Adrenal gland (tissue), 19 donors: ENCODE measurements at regions of chr6 and their contacts with region 1.

Region 1: GRCh38 chr6:144215932-144216667 is 65.8 kb downstream of the STX11 start:
- DNase-seq: peak; percentile 90 to 99 (median 95)
- H3K4me3 ChIP-seq: peak overlapping the region; percentile 0 to 83 (median 50)
- H3K27ac ChIP-seq: peak overlapping the region; percentile 91 to 98 (median 93)
- H3K4me1 ChIP-seq: peaks cover 5 to 17% of the 10 kb centered on the region in 2 donors
- H3K27me3 ChIP-seq: no peaks in the 10 kb centered on the region
- CTCF ChIP-seq: peak; percentile 54 to 93 (median 68)
- POLR2A ChIP-seq: peak; percentile 26 to 71

Region 2: DNA sequence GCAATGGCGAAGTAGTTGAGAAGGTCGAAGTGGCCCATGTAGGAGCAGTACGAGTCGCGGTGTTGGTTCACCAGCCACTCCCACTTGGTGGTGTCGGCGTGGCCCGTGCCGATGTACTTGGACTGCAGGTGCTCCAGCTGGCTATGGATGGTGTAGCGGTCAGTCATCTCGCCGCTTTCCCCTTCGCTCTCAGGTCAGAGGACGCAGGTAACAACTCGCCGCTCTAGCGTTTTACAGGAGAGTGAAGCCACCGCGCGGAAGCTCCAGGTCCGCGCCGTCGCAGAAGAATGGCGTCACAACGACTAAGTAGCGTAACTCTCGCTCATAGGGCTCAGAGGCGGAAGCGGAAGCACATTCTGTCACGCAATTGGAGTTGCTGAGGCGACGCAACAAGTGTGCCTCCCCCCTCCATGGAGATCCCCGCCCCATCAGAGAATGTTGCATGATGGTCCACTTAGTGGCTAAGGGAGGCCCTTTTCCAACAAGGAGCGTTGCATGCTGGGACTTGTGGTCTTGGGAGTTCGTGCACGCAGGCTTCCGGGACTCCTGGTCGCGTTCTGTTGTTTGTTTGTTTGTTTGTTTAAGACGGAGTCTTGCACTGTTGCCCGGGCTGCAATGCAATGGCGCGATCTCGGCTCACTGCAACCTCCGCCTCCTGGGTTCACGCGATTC is 120.6 kb before region 1 on chr6 and contains the start of gene SF3B5:
- intact Hi-C with region 1: loop called in 1 of 2 experiments (anchors 5 kb)
- DNase-seq: peak; percentile 98 to 100 (median 99)
- H3K4me3 ChIP-seq: peak within 1 kb of the TSS; percentile 47 to 98 (median 70)
- H3K27ac ChIP-seq: peak within 1 kb of the TSS; percentile 16 to 97 (median 74)
- H3K4me1 ChIP-seq: peaks cover 6 to 21% of the 10 kb centered on the region in 2 donors
- H3K27me3 ChIP-seq: no peaks in the 10 kb centered on the region
- CTCF ChIP-seq: peak in 1 of 6 experiments; percentile 1
- POLR2A ChIP-seq: peak; percentile 75 to 90
- total RNA-seq, gene SF3B5: 109 to 323 (median 194) TPM

Region 3: GRCh38 chr6:144104898-144105487 is 111.1 kb before region 1 on chr6:
- intact Hi-C with region 1: loop called in 1 of 2 experiments (anchors 5 kb)
- DNase-seq: peak in 5 of 7 donors; percentile 30 to 66 (median 38)
- H3K4me3 ChIP-seq: no peak overlapping the region
- H3K27ac ChIP-seq: no peak overlapping the region
- H3K4me1 ChIP-seq: no peaks in the 10 kb centered on the region
- H3K27me3 ChIP-seq: no peaks in the 10 kb centered on the region
- CTCF ChIP-seq: peak; percentile 58 to 87 (median 78)
- POLR2A ChIP-seq: no peak

Region 4: DNA sequence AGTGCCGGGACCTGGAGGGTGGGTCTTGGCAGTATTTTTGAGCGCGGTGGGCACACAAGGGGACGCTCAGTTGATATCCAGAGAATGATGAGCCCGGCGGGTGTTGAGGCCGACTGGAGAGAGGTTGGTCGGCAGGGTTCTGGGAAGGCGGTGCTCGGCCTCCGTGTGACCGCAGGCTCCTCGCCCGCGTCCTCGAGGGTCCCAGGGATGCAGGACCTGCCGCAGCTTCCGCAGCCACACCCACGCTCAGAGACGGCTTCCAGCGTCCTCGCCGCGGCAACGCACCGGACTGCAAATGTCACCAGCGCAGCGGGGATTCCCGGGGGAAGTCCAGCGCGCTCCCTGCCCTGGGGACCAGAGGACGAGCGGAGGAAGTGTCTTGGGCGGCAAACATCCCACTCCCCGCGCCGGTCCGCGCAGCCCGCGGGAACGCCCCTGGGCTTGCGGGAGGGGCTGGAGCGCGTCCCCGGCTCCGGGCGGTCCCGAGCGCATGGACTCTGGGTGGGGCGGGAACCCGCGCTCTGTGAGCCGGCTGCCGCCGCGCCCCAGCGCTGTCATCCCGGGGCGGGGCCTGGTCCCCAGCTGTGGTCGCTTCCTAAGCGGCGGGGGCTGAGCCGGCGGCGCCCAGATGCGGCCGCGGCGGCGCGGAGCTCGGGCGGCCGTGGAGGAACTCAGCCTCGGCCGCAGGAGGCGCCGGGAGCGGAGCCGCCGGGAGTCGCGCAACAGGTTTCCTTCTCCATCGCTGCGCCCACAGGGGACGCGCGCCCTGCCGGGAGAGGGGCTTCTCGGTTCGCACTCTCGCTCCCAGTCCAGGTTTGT is 66.0 kb before region 1 on chr6 and contains the start of gene STX11:
- intact Hi-C with region 1: loop called in 1 of 2 experiments (anchors 10 kb)
- DNase-seq: peak; percentile 56 to 71 (median 60)
- H3K4me3 ChIP-seq: peak within 1 kb of the TSS; percentile 22 to 74 (median 37)
- H3K27ac ChIP-seq: peak within 1 kb of the TSS in 4 of 5 donors; percentile 67 to 89 (median 78)
- H3K4me1 ChIP-seq: no peaks in the 10 kb centered on the region
- H3K27me3 ChIP-seq: no peaks in the 10 kb centered on the region
- CTCF ChIP-seq: no peak
- POLR2A ChIP-seq: peak; percentile 55 to 72
- total RNA-seq, gene STX11: 0.50 to 22.2 (median 12.9) TPM

Region 5: DNA sequence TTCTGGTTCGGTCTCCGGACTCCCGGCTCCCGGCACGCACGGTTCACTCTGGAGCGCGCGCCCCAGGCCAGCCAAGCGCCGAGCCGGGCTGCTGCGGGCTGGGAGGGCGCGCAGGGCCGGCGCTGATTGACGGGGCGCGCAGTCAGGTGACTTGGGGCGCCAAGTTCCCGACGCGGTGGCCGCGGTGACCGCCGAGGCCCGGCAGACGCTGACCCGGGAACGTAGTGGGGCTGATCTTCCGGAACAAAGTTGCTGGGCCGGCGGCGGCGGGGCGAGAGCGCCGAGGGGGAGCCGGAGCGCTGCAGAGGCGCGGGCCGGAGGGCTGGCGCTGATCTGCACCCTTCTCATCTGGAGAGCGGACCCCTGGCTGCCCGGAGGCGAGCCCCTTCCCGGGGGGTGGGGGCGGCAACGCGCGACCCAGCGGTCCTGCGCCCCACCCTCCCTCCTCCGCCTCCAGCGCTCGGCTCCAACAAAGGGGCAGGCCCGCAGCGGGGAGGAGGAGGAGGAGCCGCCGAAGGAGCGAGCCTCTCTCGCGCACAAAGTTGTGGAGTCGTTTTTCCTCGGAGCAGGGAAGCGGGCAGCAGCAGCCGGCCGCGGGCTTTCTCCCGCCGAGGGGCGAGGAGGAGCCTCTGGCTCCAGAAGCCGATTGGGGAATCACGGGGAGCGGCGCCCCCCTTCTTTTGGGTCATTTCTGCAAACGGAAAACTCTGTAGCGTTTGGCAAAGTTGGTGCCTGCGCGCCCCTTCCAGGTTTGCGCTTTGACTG is 68.9 kb after region 1 on chr6 and contains the start of gene UTRN:
- intact Hi-C with region 1: loop called in 1 of 2 experiments (anchors 5 kb)
- DNase-seq: peak; percentile 80 to 85 (median 83)
- H3K4me3 ChIP-seq: peak within 1 kb of the TSS; percentile 52 to 95 (median 90)
- H3K27ac ChIP-seq: peak within 1 kb of the TSS; percentile 73 to 97 (median 97)
- H3K4me1 ChIP-seq: peaks cover 6 to 24% of the 10 kb centered on the region in 2 donors
- H3K27me3 ChIP-seq: no peaks in the 10 kb centered on the region
- CTCF ChIP-seq: no peak
- POLR2A ChIP-seq: peak in 1 of 2 donors; percentile 88
- total RNA-seq, gene UTRN: 65.2 to 194 (median 120) TPM

Region 6: DNA sequence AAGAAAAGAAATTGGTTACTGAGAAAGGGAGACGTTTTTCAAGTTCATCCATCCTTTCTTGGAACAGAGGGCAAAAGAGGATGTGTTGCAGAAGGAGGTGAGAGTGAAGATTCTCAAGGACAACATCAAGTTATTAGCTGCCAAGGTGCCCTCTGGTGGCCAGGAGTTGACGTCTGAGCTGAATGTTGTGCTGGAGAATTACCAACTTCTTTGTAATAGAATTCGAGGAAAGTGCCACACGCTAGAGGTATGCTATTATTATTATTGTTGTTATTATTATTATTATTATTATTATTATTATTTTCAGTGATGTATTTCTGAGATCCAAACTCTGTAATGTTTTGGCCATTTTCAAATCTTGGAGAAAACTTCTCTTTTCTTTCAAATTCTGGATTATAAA is 266.0 kb after region 1 on chr6:
- intact Hi-C with region 1: loop called in 1 of 2 experiments (anchors 10 kb)
- DNase-seq: peak; percentile 71 to 94 (median 83)
- H3K4me3 ChIP-seq: no peak overlapping the region
- H3K27ac ChIP-seq: no peak overlapping the region
- H3K4me1 ChIP-seq: peaks cover 10 to 16% of the 10 kb centered on the region in 2 donors
- H3K27me3 ChIP-seq: no peaks in the 10 kb centered on the region
- CTCF ChIP-seq: peak; percentile 53 to 76 (median 66)
- POLR2A ChIP-seq: no peak